Activated naive CD4-positive, alpha-beta T cell treated with anti-CD3 and anti-CD28 coated beads for 36 hours (primary cell): ENCODE measurements at regions of chr7 and their contacts with region 1.

Region 1: GRCh38 chr7:24866004-24866615 is 108.8 kb upstream of the GSDME start:
- DNase-seq: peak; percentile 59
- H3K4me3 Mint-ChIP-seq: no peak overlapping the region
- H3K27ac Mint-ChIP-seq: peak overlapping the region; percentile 47
- H3K4me1 Mint-ChIP-seq: peaks cover 21% of the 10 kb centered on the region
- H3K27me3 Mint-ChIP-seq: no peaks in the 10 kb centered on the region

Region 2: DNA sequence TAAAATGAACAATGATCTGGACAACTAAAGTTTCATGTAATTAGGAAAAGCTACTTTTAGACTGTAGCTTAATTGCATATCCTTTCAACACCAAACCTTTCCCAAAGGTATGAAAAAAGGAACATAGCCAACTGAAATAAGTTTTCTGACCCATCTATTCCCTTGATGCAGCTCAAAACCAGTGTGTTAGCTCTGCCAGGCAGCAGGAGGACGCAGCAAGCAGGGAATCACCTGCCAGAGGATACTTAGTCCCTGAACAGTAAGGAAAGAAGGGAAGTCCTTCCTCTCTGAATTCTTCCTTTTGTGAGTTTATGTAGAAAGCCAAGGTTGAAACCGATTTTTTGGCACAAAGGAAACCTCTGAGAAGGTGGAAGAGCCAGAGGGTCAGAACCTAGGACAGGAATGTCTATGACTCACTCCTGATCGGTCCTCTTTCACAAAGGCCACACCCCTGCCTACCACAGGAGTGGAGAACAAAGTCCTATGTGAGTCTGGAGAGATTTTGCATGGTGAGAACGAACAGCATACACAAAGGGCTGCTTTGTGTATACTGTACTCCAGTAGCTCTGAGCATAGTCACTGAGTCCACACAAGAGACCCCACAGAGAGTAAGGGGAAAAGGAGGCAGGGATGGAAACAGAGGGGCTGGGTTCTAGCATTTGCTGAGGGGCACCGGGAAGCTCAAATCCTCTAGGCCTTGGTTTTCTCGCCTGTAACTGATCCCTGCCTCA is 40.0 kb before region 1 on chr7:
- CTCF ChIA-PET with region 1: no interaction called
- intact Hi-C with region 1: loop called (anchors 1 kb)
- DNase-seq: no peak
- H3K4me3 Mint-ChIP-seq: no peak overlapping the region
- H3K27ac Mint-ChIP-seq: no peak overlapping the region
- H3K4me1 Mint-ChIP-seq: peaks cover 40% of the 10 kb centered on the region
- H3K27me3 Mint-ChIP-seq: no peaks in the 10 kb centered on the region

Region 3: DNA sequence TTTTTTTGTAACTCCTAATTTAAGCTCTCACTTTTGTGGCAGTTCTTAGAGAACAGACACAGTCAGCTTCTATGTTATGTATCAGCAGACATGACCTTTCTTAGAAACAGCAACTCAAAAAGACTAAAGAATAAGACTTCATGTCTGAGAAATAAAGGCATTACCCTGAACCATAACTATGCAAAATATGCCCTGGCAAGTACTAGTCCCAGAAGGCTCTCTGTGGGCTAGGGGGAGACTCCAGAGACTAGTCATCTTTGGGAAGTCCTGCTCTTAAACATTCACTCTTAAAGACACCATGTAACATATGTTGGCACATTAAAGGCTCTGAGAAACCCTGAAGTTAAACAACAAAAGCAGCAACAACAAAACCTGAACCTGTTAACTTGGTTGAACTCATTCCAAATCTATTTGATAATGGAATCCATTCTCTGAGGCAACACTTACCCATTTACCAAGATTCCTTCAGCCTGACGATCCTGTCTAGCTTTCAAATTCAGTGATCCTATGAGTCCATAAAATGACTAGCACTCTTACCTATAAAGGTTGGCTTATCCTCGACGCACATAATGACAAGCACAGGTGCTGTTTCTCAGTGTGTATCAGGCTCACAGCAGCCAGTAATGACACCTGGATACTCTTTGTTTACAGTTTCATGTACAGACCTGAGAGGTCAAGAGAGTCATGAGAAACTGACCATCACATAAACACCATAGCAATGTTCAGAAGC is 51.6 kb after region 1 on chr7:
- CTCF ChIA-PET with region 1: no interaction called
- intact Hi-C with region 1: no loop called
- DNase-seq: no peak
- H3K4me3 Mint-ChIP-seq: no peak overlapping the region
- H3K27ac Mint-ChIP-seq: peak overlapping the region; percentile 37
- H3K4me1 Mint-ChIP-seq: peaks cover 94% of the 10 kb centered on the region
- H3K27me3 Mint-ChIP-seq: no peaks in the 10 kb centered on the region

Region 4: DNA sequence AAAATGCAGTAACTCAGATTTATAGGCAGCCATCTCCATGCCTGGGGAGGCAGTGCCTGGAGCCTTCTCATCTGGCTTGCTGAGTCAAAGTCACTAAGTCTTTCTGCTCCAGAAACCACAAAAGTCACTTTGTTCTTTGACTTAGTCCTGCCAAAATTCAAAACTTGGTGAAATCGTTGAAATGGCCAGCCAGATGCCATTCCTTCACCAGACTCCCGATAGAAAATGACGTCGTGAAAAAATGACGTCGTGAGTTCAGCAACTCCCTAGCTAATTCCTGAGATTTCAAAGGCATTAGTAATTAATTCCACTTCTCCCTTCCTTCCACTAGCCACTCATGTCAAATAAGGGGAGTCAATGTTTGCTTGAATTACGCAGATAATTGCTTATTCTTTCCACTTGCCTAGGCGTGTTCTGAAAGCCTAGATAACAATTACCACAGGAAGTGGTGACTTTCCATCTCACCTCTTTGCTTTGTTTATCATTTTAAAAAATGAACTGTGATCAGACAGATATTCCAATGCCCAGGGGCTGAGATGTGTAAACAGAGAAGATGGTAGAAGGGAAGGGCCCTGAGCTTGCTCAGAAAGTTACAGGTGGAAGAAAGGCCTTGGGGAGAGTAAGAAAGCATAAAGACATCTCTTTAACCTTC is 162.4 kb after region 1 on chr7:
- CTCF ChIA-PET with region 1: no interaction called
- intact Hi-C with region 1: loop called (anchors 1 kb)
- DNase-seq: peak; percentile 38
- H3K4me3 Mint-ChIP-seq: no peak overlapping the region
- H3K27ac Mint-ChIP-seq: peak overlapping the region; percentile 79
- H3K4me1 Mint-ChIP-seq: peaks cover 37% of the 10 kb centered on the region
- H3K27me3 Mint-ChIP-seq: no peaks in the 10 kb centered on the region

Region 5: DNA sequence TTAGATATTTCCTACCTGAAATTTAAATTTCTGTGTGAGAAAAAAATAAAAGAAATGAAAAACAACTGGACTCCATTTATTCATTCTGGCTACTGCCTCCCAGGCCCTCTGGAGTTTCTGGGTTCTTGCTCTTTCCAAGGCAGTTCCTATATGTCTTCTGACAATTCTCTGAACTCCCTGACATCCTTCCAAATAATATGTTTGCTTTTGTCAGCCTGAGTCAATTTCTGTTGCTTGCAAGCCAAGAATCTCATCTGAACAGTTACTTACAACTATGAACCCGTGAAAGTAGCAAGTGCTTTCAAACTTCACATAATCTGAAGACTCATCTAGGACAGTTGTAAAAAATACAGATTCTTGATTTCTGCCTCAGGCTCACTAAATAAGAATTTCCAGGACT is 578.9 kb after region 1 on chr7:
- CTCF ChIA-PET with region 1: no interaction called
- intact Hi-C with region 1: no loop called
- DNase-seq: no peak
- H3K4me3 Mint-ChIP-seq: no peak overlapping the region
- H3K27ac Mint-ChIP-seq: no peak overlapping the region
- H3K4me1 Mint-ChIP-seq: no peaks in the 10 kb centered on the region
- H3K27me3 Mint-ChIP-seq: peaks cover 6% of the 10 kb centered on the region